Dorsolateral prefrontal cortex (tissue), 120 donors: ENCODE measurements at regions of chr12 and their contacts with region 1.

Region 1: DNA sequence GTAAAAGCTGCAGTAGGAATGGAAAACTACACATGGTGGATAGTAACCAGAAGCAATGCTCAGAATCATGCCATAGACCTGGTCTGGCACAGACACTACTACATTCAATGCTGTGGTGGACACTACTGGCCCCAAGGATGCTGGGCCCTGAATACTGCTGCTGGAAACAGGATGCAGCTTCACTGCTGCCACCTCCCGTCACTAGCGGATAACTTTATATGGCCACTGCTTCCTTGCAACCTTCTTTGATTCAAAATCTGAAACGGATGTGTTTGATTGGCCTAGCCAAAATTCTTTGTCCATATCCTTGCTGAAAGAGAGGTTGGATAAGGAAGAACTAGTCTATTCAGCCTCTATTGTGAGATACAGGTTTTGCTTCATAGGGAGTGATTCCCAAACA is 30.7 kb downstream of the ADCY6 start:
- DNase-seq: no peak
- H3K4me3 ChIP-seq: no peak overlapping the region
- H3K27ac ChIP-seq: no peak overlapping the region
- H3K27me3 ChIP-seq: no peaks in the 10 kb centered on the region
- CTCF ChIP-seq: no peak

Region 2: DNA sequence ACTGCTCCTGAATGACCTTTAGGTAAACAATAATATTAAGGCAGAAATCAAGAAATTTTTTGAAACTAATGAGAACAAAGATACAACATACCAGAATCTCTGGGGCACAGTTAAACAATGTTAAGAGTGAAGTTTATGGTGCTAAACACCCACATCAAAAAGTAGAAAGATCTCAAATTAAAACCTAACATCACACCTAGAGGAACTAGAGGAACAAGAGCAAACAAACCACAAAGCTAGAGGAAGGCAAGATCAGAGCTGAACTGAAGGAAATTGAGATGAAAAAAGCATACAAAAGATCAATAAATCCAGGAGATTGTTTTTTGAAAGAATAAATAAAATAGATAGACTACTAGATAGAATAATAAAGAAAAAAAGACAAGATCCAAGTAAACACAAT is 225.6 kb before region 1 on chr12:
- intact Hi-C with region 1: no loop called
- DNase-seq: no peak
- H3K4me3 ChIP-seq: no peak overlapping the region
- H3K27ac ChIP-seq: no peak overlapping the region
- H3K27me3 ChIP-seq: peaks cover 0 to 2% (median 0%) of the 10 kb centered on the region in 45 donors
- CTCF ChIP-seq: no peak

Region 3: GRCh38 chr12:48795480-48796455 is 37.5 kb after region 1 on chr12:
- intact Hi-C with region 1: loop called (anchors 1 to 2 kb)
- DNase-seq: peak in 8 of 10 donors; percentile 56 to 88 (median 72)
- H3K4me3 ChIP-seq: no peak overlapping the region
- H3K27ac ChIP-seq: no peak overlapping the region
- H3K27me3 ChIP-seq: peaks cover 0 to 3% (median 0%) of the 10 kb centered on the region in 45 donors
- CTCF ChIP-seq: peak; percentile 85 to 99 (median 96)